ENCODE measurements at regions of chr19 and their contacts with region 1.

Region 1: GRCh38 chr19:48999481-49000325 is 6.0 kb downstream of the RUVBL2 start:
- DNase-seq: peak; percentile 84
- H3K4me3 Mint-ChIP-seq: no peak overlapping the region
- H3K27ac Mint-ChIP-seq: peak overlapping the region; percentile 38
- H3K4me1 Mint-ChIP-seq: peaks cover 18% of the 10 kb centered on the region
- H3K27me3 Mint-ChIP-seq: no peaks in the 10 kb centered on the region

Region 2: GRCh38 chr19:49017666-49018351 is 18.1 kb after region 1 on chr19:
- CTCF ChIA-PET with region 1: interaction called, 42 read pairs
- POLR2A ChIA-PET with region 1: interaction called, 7 read pairs
- intact Hi-C with region 1: no loop called
- DNase-seq: peak; percentile 74
- H3K4me3 Mint-ChIP-seq: peak overlapping the region; percentile 79
- H3K27ac Mint-ChIP-seq: no peak overlapping the region
- H3K4me1 Mint-ChIP-seq: peaks cover 37% of the 10 kb centered on the region
- H3K27me3 Mint-ChIP-seq: peaks cover 4% of the 10 kb centered on the region

Region 3: GRCh38 chr19:49042177-49042576 is 42.5 kb after region 1 on chr19:
- CTCF ChIA-PET with region 1: no interaction called
- POLR2A ChIA-PET with region 1: no interaction called
- intact Hi-C with region 1: no loop called
- DNase-seq: no peak
- H3K4me3 Mint-ChIP-seq: no peak overlapping the region
- H3K27ac Mint-ChIP-seq: no peak overlapping the region
- H3K4me1 Mint-ChIP-seq: no peaks in the 10 kb centered on the region
- H3K27me3 Mint-ChIP-seq: no peaks in the 10 kb centered on the region